WTC11 (cell line): ENCODE measurements at regions of chr1 and their contacts with region 1.

Region 1: GRCh38 chr1:204162231-204163074 is 3.7 kb downstream of the REN start:
- DNase-seq: peak; percentile 94
- ATAC-seq: peak; percentile 98
- H3K4me3 Mint-ChIP-seq: no peak overlapping the region
- H3K27ac Mint-ChIP-seq: no peak overlapping the region
- H3K4me1 Mint-ChIP-seq: peaks cover 2% of the 10 kb centered on the region; the same call in 1 of the 2 replicates
- H3K27me3 Mint-ChIP-seq: peaks cover 8% of the 10 kb centered on the region
- CTCF ChIP-seq: peak; percentile 99

Region 2: GRCh38 chr1:203968728-203969127 is 193.7 kb before region 1 on chr1:
- CTCF ChIA-PET with region 1: no interaction called
- POLR2A ChIA-PET with region 1: no interaction called
- DNase-seq: no peak
- ATAC-seq: no peak
- H3K4me3 Mint-ChIP-seq: no peak overlapping the region
- H3K27ac Mint-ChIP-seq: no peak overlapping the region
- H3K4me1 Mint-ChIP-seq: no peaks in the 10 kb centered on the region
- H3K27me3 Mint-ChIP-seq: peaks cover 11% of the 10 kb centered on the region
- CTCF ChIP-seq: no peak

Region 3: GRCh38 chr1:204087893-204088528 is 74.4 kb before region 1 on chr1:
- CTCF ChIA-PET with region 1: no interaction called
- POLR2A ChIA-PET with region 1: no interaction called
- DNase-seq: no peak
- ATAC-seq: no peak
- H3K4me3 Mint-ChIP-seq: no peak overlapping the region
- H3K27ac Mint-ChIP-seq: peak overlapping the region; percentile 90
- H3K4me1 Mint-ChIP-seq: peaks cover 97% of the 10 kb centered on the region
- H3K27me3 Mint-ChIP-seq: no peaks in the 10 kb centered on the region
- CTCF ChIP-seq: no peak

Region 4: GRCh38 chr1:204136814-204137213 is 25.6 kb before region 1 on chr1:
- CTCF ChIA-PET with region 1: interaction called, 20 read pairs
- POLR2A ChIA-PET with region 1: no interaction called
- DNase-seq: no peak
- ATAC-seq: peak; percentile 59
- H3K4me3 Mint-ChIP-seq: no peak overlapping the region
- H3K27ac Mint-ChIP-seq: no peak overlapping the region
- H3K4me1 Mint-ChIP-seq: no peaks in the 10 kb centered on the region
- H3K27me3 Mint-ChIP-seq: peaks cover 9% of the 10 kb centered on the region
- CTCF ChIP-seq: no peak

Region 5: DNA sequence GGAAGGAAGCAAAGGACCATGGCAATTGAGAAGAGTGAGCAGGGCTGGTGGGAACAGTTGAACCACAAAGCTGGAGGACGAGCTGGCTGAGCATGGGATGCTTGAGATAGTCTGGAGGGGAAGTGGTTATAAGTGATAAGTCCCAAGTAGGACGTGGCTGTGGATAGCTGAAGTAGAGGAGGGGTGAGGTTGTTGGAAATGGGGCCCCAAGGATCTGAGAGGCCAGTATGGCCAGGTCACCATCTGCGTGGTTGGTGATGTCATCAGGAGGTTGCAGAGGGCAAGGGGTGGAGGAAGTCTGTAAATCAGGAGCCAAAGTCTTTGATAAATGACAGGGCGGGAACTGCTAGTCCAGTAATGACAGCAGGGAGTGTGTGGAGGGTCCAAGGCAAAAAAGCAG is 14.7 kb after region 1 on chr1:
- CTCF ChIA-PET with region 1: interaction called, 20 read pairs
- POLR2A ChIA-PET with region 1: interaction called, 4 read pairs
- DNase-seq: no peak
- ATAC-seq: no peak
- H3K4me3 Mint-ChIP-seq: no peak overlapping the region
- H3K27ac Mint-ChIP-seq: no peak overlapping the region
- H3K4me1 Mint-ChIP-seq: no peaks in the 10 kb centered on the region
- H3K27me3 Mint-ChIP-seq: peaks cover 42% of the 10 kb centered on the region
- CTCF ChIP-seq: no peak

Region 6: DNA sequence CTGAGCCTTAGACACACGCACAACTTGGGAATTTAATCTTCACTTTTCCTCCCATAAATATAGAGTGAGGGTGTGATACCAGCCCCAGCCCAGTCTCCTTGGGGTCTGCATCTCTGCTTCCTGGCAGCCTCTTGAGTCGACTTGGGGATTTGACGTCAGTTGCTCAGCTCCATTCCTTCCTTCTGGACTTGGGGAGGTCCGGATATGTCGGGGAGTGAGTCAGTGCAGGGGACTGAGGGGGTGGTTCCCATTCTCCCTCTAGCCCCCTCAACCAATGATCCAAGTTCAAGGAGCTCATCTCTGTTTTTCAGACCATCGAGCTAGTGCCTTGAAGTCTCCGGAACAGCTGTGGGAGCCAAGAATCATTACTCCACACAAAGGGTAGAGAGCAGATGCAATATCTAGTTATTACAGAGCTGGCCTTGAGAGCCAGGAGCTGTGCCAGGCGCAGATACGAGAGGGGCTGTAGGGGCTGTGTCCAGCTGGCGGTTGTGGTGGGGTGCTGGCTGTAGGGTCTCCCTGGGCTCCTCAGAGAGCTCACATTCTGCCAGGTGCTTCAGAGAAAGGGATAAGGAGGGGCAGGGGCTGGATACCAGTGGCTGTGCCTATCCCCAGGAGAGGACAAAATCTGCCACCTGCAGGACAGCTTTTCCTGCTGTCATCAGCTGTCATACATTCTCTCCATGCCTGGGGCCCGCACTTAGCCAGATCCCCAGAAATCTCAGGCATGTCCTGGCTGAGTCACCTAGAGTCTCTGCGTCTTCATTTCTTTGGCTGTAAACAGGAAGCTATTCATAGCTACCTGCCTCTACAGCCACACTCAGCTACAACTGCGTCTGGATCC is 35.9 kb after region 1 on chr1:
- CTCF ChIA-PET with region 1: interaction called, 159 read pairs
- POLR2A ChIA-PET with region 1: interaction called, 3 read pairs
- DNase-seq: no peak
- ATAC-seq: peak; percentile 48
- H3K4me3 Mint-ChIP-seq: no peak overlapping the region
- H3K27ac Mint-ChIP-seq: no peak overlapping the region; the same call in 1 of the 2 replicates
- H3K4me1 Mint-ChIP-seq: peaks cover 12% of the 10 kb centered on the region
- H3K27me3 Mint-ChIP-seq: peaks cover 7% of the 10 kb centered on the region
- CTCF ChIP-seq: no peak

Region 7: DNA sequence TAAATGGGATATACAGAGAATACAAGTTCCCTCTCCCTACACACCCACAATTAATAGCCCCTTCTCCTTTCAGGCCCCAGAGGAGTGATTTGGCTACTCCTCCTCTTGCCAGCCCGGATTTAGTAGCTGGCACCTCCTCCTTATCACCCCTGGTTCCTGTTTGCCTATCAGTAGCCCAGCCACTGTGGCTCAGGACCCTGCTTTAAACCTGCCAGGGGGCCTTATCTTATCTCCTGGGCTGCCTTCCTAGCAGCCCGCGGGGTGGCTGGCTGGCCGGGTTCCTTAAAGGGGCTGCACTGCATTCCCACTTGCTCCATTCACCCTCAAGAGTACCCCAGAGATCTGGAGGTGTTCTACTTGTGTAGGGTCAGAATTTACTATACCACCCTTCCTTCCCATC is 126.8 kb after region 1 on chr1:
- CTCF ChIA-PET with region 1: no interaction called
- POLR2A ChIA-PET with region 1: no interaction called
- DNase-seq: no peak
- ATAC-seq: no peak
- H3K4me3 Mint-ChIP-seq: no peak overlapping the region
- H3K27ac Mint-ChIP-seq: no peak overlapping the region
- H3K4me1 Mint-ChIP-seq: peaks cover 40% of the 10 kb centered on the region
- H3K27me3 Mint-ChIP-seq: no peaks in the 10 kb centered on the region
- CTCF ChIP-seq: no peak

Region 8: GRCh38 chr1:204363335-204364124 is 201.1 kb after region 1 on chr1:
- CTCF ChIA-PET with region 1: interaction called, 46 read pairs
- POLR2A ChIA-PET with region 1: interaction called, 3 read pairs
- DNase-seq: peak; percentile 73
- ATAC-seq: peak; percentile 43
- H3K4me3 Mint-ChIP-seq: peak overlapping the region; percentile 56
- H3K27ac Mint-ChIP-seq: no peak overlapping the region
- H3K4me1 Mint-ChIP-seq: peaks cover 19% of the 10 kb centered on the region
- H3K27me3 Mint-ChIP-seq: peaks cover 20% of the 10 kb centered on the region
- CTCF ChIP-seq: peak; percentile 98